Mammary epithelial cell (primary cell): ENCODE measurements at regions of chr7 and their contacts with region 1.

Region 1: DNA sequence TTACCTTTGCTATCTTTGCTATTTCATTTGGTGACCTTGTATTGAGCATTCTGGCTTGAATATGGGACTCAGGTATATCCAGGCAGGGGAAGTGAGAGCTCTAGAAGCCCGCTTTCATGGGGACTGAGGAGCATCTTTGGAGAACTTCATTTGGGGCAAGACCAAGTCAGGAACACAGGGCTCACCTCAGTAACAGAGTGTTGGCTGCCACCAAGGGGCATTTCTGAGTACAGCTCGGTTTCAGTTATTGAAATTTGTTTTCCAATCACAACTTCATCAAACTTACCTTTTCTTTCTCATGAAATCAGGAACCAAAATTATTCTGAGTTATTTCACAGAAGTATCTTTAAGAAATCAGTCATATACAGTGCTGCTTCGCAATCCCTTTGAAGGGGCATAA is 337.2 kb downstream of the C7orf25 start:
- DNase-seq: no peak
- H3K4me3 ChIP-seq: no peak overlapping the region
- H3K27ac ChIP-seq: no peak overlapping the region
- H3K4me1 ChIP-seq: peaks cover 3% of the 10 kb centered on the region
- H3K27me3 ChIP-seq: no peaks in the 10 kb centered on the region
- CTCF ChIP-seq: peak; percentile 53 to 64

Region 2: DNA sequence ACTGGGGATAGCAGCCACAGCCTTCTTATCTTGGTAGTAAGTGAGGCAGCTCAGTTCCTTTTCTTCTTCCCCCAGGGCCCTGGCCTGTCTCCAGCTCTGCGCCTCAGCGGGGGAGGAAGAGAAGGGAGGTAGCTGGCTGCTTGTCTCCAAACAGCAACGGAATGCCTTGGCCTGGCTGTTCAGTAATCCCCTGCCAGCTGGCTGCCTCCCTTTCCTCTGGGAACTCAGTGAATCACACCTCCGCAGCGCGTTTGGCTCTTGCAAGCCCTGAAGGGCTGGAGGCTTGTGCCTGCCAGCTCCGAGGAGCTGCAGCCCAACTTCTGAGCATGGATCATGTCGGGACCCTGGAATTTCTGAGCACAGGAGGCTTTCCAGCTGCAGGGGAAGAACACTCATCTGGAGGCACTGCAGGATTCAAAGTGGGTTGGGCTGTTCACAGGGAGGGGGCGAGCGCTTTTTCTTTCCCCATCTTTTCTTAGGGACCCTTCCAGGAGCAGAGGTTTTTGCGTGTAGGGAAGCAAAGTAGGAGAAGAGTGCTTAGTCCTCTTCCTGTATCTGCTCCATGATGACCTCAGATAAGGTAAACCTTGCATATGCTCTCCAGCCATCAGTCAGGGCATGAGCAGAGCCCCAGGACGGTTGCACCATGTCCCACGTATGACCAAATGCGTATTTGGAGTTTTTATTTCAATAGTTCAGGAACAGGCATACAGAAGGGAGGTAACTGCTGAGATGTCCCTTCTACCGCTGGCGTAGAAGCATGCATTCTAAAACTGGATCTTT is 618.6 kb before region 1 on chr7:
- CTCF ChIA-PET with region 1: no interaction called
- dilution Hi-C with region 1: no loop called
- in situ Hi-C with region 1: loop called in 1 of 2 experiments (anchors 25 kb)
- intact Hi-C with region 1: no loop called
- DNase-seq: peak; percentile 95
- H3K4me3 ChIP-seq: no peak overlapping the region
- H3K27ac ChIP-seq: no peak overlapping the region
- H3K4me1 ChIP-seq: peaks cover 16% of the 10 kb centered on the region
- H3K27me3 ChIP-seq: no peaks in the 10 kb centered on the region
- CTCF ChIP-seq: no peak

Region 3: GRCh38 chr7:41977151-41977651 is 597.5 kb before region 1 on chr7:
- CTCF ChIA-PET with region 1: interaction called, 3 read pairs
- dilution Hi-C with region 1: no loop called
- in situ Hi-C with region 1: loop called in 1 of 2 experiments (anchors 25 kb)
- intact Hi-C with region 1: loop called (anchors 1 kb)
- DNase-seq: peak; percentile 41
- H3K4me3 ChIP-seq: no peak overlapping the region
- H3K27ac ChIP-seq: no peak overlapping the region
- H3K4me1 ChIP-seq: no peaks in the 10 kb centered on the region
- H3K27me3 ChIP-seq: no peaks in the 10 kb centered on the region
- CTCF ChIP-seq: peak; percentile 82 to 85

Region 4: GRCh38 chr7:42115795-42116194 is 458.9 kb before region 1 on chr7:
- CTCF ChIA-PET with region 1: no interaction called
- dilution Hi-C with region 1: no loop called
- in situ Hi-C with region 1: no loop called
- intact Hi-C with region 1: loop called (anchors 10 kb)
- DNase-seq: no peak
- H3K4me3 ChIP-seq: no peak overlapping the region
- H3K27ac ChIP-seq: no peak overlapping the region
- H3K4me1 ChIP-seq: no peaks in the 10 kb centered on the region
- H3K27me3 ChIP-seq: no peaks in the 10 kb centered on the region
- CTCF ChIP-seq: peak in 1 of 2 donors; percentile 15

Region 5: GRCh38 chr7:42272793-42273665 is 301.7 kb before region 1 on chr7:
- CTCF ChIA-PET with region 1: interaction called, 4 read pairs
- dilution Hi-C with region 1: no loop called
- in situ Hi-C with region 1: no loop called
- intact Hi-C with region 1: loop called (anchors 1 kb)
- DNase-seq: peak; percentile 76
- H3K4me3 ChIP-seq: no peak overlapping the region
- H3K27ac ChIP-seq: peak overlapping the region; percentile 70
- H3K4me1 ChIP-seq: peaks cover 20% of the 10 kb centered on the region
- H3K27me3 ChIP-seq: no peaks in the 10 kb centered on the region
- CTCF ChIP-seq: peak; percentile 84 to 86

Region 6: DNA sequence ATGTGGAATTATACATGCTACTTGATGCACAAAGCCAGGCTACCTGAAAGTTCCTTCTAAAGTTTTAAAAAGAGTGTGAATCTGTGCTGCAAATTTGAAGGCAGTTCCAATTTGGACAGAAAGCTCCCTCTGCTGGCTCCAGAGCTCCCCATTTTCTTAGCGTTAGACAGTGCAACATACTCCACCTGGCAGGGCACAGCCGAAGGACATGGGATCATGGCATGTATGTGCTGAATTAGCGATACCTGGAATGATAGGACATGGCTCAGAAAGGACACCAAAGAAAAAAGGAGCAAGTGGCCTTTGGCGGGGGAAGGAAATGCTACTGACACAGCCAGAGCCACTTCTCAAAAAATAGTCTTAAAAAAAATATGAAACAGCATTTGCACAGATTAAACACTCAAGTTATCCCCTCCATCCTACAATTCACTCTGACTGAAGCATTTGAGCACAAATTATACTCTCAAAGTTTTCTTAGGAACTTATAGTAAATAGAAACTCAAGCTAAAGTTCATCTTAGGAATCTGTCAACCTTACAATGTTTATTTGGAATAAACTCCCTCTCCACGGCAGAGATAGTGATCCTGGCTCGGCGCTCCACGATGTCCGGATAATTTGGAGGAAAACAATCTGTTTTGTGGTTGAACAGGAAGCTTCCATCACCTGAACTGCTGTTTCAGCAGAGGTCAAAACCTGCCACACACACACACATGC is 257.2 kb after region 1 on chr7:
- CTCF ChIA-PET with region 1: no interaction called
- dilution Hi-C with region 1: no loop called
- in situ Hi-C with region 1: no loop called
- intact Hi-C with region 1: loop called (anchors 1 kb)
- DNase-seq: peak; percentile 30
- H3K4me3 ChIP-seq: no peak overlapping the region
- H3K27ac ChIP-seq: no peak overlapping the region
- H3K4me1 ChIP-seq: no peaks in the 10 kb centered on the region
- H3K27me3 ChIP-seq: no peaks in the 10 kb centered on the region
- CTCF ChIP-seq: peak; percentile 60 to 90

Region 7: DNA sequence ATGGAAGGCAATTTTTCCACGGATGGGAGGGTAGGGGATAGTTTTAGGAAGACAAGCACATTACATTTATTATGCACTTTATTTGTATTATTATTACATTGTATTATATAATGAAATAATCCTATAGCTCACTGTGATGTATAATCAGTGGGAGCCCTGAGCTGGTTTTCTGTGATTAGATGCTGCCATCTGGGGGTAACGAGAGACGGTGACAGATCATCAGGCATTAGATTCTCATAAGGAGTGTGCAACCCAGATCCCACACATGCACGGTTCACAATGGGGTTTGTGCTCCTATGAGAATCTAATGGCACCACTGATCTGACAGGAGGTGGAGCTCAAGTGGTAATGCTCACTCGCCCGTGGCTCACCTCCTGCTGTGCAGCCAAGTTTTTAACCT is 904.4 kb after region 1 on chr7:
- CTCF ChIA-PET with region 1: no interaction called
- dilution Hi-C with region 1: no loop called
- in situ Hi-C with region 1: no loop called
- intact Hi-C with region 1: loop called (anchors 5 kb)
- DNase-seq: peak; percentile 28
- H3K4me3 ChIP-seq: no peak overlapping the region
- H3K27ac ChIP-seq: no peak overlapping the region
- H3K4me1 ChIP-seq: peaks cover 5% of the 10 kb centered on the region
- H3K27me3 ChIP-seq: no peaks in the 10 kb centered on the region
- CTCF ChIP-seq: peak in 1 of 2 donors; percentile 27